Activated T-helper 1 cell treated with anti-CD3 and anti-CD28 coated beads, Interleukin-12 subunit alpha, Interleukin-12 subunit beta, Interleukin-2, Interleukin-4 antibody, amounts not matched to agents 30 ng/mL and 10 ng/mL and 1 ng/mL, durations not matched to agents 14 hours and 24 hours and 36 hours (primary cell): ENCODE measurements at regions of chr1 and their contacts with region 1.

Region 1: DNA sequence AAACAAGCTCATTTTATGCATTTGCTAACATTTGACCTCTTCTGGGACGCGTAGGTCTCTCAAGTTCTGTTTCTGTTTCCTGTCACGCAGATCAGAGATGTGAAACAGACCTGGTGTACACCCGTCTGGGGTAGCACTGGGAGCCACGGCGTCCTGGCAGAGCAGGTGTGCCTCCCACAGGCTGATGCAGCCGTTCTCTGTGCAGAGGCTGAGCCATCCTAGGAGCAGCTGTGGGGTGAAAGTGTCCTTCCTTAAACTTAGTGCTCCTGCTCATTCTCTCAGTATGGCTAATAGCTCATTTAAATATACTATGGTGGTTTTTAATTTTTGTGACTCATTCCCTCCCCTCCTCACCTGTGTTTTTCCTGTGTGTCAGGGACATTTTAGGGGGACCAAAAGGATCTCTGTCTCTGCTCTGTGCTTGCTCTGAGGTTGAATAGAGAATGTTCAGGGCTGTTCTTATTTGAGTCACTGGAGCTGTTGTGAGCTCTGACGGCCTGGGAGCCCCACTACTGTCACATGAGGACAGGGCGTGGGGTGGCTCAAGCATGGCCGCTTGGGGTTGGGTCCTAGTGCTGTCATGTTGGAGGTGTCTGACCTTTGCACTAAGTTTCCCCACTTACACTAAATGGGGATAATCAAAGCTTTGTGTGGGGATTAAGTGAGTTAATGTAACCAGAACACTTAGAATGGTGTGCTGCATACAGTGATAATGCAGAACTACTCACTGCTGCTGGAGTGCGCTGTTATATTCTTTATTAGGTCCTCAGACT is 43.0 kb downstream of the GALNT2 start:
- DNase-seq: peak; percentile 57
- H3K4me3 Mint-ChIP-seq: peak overlapping the region; percentile 53
- H3K27ac Mint-ChIP-seq: peak overlapping the region; percentile 89
- H3K4me1 Mint-ChIP-seq: peaks cover 82% of the 10 kb centered on the region
- H3K27me3 Mint-ChIP-seq: no peaks in the 10 kb centered on the region

Region 2: GRCh38 chr1:229836324-229836723 is 273.8 kb before region 1 on chr1:
- intact Hi-C with region 1: no loop called
- DNase-seq: no peak
- H3K4me3 Mint-ChIP-seq: no peak overlapping the region
- H3K27ac Mint-ChIP-seq: no peak overlapping the region
- H3K4me1 Mint-ChIP-seq: no peaks in the 10 kb centered on the region
- H3K27me3 Mint-ChIP-seq: peaks cover 8% of the 10 kb centered on the region

Region 3: DNA sequence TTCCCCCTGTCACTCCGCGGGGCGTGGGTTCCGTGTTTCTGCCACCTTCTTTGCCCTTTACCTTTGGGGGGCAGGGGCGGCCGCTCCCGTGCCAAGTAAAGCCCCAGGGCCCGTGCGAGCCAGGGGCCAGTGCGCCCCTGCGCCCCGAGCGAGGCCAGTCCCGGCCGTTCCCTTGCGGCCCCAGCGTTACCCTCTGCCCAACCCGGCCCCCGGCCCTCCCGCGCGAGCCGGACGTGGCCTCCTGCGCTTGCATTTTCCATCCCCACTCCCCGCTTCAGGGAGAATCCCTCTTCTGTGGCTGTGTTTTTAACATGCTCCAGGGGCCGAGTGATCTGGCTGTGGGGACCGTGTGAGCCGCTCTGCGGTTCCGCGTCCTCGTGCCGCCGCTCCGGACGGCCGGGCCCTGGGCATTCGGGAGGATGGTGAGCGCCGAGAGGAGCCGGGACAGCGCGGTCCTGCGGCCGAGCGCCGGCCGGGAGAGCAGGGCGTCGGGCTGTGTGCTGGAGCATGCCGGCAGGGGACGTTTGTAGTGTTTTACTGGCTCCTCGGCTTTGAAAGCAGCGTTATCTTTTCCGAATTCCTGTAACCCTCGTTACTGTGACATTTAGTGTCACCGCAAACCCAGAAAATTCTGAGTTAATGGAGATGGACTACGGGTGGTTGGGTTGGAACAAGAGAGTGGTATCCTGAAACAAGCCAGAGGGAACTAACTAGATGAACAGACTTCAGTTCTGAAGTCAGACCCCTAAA is 42.0 kb before region 1 on chr1:
- intact Hi-C with region 1: no loop called
- DNase-seq: peak; percentile 19
- H3K4me3 Mint-ChIP-seq: peak overlapping the region; percentile 93
- H3K27ac Mint-ChIP-seq: peak overlapping the region; percentile 89
- H3K4me1 Mint-ChIP-seq: peaks cover 59% of the 10 kb centered on the region
- H3K27me3 Mint-ChIP-seq: no peaks in the 10 kb centered on the region

Region 4: GRCh38 chr1:230084138-230084880 is 25.8 kb before region 1 on chr1:
- intact Hi-C with region 1: loop called (anchors 1 kb)
- DNase-seq: peak; percentile 23
- H3K4me3 Mint-ChIP-seq: peak overlapping the region; percentile 30
- H3K27ac Mint-ChIP-seq: peak overlapping the region; percentile 83
- H3K4me1 Mint-ChIP-seq: peaks cover 66% of the 10 kb centered on the region
- H3K27me3 Mint-ChIP-seq: peaks cover 1% of the 10 kb centered on the region

Region 5: DNA sequence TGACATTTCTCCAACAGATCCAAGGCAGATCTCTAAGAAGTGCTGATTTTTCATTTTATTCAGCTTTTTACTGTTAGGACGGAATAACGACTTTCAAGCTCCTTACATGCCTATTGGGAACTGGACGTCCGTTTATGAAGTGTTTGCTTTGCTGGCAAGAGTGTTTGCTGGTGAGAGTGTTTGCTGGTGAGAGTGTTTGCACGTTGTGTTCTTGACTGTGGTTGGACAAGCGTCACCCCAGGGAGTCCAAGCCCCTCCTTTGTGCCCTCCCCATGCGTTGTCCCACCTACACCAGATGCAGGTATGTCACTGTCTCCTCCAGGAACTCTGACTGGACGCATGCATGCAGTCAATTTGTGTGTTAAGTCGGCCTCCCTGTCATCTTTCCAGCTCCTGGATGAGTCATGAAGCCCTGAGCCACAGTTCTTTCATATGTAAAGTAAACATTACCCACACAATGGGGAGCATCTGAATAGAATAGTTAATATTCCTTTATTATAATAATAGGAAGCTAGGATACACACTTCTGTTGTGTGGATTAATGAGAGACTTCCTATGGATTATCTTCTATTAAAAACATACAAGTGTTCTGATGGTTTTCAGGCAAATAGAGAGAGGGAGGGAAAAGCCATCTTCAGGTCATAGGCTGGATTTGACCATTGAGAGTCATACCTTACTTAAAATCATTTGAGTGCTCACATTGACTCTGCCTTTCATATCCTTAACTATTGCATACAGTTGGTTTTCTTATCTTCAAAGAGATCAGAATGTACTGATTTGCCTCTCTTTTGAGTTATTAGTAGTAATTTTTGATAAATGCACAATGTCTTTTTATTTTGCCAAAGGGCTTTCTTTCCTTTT is 76.2 kb after region 1 on chr1:
- intact Hi-C with region 1: loop called (anchors 2 kb)
- DNase-seq: no peak
- H3K4me3 Mint-ChIP-seq: no peak overlapping the region
- H3K27ac Mint-ChIP-seq: peak overlapping the region; percentile 74
- H3K4me1 Mint-ChIP-seq: peaks cover 41% of the 10 kb centered on the region
- H3K27me3 Mint-ChIP-seq: no peaks in the 10 kb centered on the region

Region 6: DNA sequence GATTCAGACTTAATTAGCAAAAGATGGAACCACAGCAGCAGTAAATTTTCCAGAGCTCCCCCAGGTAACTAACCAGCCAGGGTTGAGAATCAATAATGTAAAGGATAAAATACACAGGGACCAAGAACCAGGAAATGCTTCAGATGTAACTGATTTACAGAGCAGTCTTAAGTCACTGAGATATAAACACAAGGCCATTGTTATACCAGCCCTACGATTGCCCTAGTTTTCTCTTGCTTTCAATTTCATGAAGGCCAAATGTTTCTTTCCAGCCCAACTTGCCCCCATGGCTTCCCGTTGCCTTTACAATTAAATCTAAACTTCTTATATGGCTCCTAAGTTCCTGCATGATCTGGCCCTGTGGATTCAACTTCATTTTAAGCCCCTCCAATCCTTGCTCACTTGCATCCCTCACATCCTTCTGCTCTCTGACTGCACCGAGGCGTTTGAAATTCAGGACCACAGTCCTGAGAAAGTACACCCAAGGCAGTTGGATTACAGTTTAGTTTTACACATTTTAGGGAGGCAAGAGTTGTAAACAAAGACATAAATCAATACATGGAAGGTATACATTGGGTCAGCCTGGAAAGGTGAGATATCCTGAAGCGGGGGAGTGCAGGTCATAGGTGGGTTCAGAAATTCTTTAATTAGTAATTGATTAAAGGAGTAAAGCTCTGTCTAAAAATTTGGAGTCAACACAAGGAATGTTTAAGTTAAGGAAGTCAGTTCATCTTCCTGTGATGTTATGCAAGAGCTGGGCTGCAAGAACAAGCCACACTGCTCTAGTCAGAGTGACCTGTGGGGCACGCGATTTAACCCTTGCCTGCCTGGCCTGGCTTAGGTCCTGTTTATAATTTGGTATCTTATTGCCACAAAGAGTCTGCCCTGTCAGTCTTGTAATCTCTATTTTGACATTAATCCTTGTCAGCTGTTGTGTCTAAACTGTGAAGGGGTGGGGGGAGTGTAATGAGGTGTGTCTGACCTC is 462.3 kb after region 1 on chr1:
- intact Hi-C with region 1: no loop called
- DNase-seq: no peak
- H3K4me3 Mint-ChIP-seq: no peak overlapping the region
- H3K27ac Mint-ChIP-seq: no peak overlapping the region
- H3K4me1 Mint-ChIP-seq: no peaks in the 10 kb centered on the region
- H3K27me3 Mint-ChIP-seq: peaks cover 11% of the 10 kb centered on the region